ENCODE measurements at regions of chr17 and their contacts with region 1.

Region 1: GRCh38 chr17:67376737-67377487 is at the start of gene PITPNC1:
- DNase-seq: no peak
- ATAC-seq: peak; percentile 89
- H3K4me3 ChIP-seq: peak within 1 kb of the TSS; percentile 80 to 85
- H3K27ac ChIP-seq: peak within 1 kb of the TSS; percentile 70
- H3K4me1 ChIP-seq: peaks cover 12% of the 10 kb centered on the region
- H3K27me3 ChIP-seq: no peaks in the 10 kb centered on the region
- CTCF ChIP-seq: no peak
- total RNA-seq, gene PITPNC1: 20.8 TPM

Region 2: GRCh38 chr17:66580184-66580955 is 796.5 kb before region 1 on chr17:
- CTCF ChIA-PET with region 1: interaction called, 13 read pairs
- POLR2A ChIA-PET with region 1: no interaction called
- in situ Hi-C with region 1: no loop called
- intact Hi-C with region 1: no loop called
- DNase-seq: peak; percentile 7
- ATAC-seq: peak; percentile 66
- H3K4me3 ChIP-seq: no peak overlapping the region
- H3K27ac ChIP-seq: peak overlapping the region; percentile 70
- H3K4me1 ChIP-seq: peaks cover 26% of the 10 kb centered on the region
- H3K27me3 ChIP-seq: no peaks in the 10 kb centered on the region
- CTCF ChIP-seq: no peak

Region 3: GRCh38 chr17:67400193-67400592 is 23.3 kb after region 1 on chr17:
- CTCF ChIA-PET with region 1: no interaction called
- POLR2A ChIA-PET with region 1: interaction called, 19 read pairs
- in situ Hi-C with region 1: no loop called
- intact Hi-C with region 1: no loop called
- DNase-seq: no peak
- ATAC-seq: no peak
- H3K4me3 ChIP-seq: no peak overlapping the region
- H3K27ac ChIP-seq: peak overlapping the region; percentile 44
- H3K4me1 ChIP-seq: peaks cover 12% of the 10 kb centered on the region
- H3K27me3 ChIP-seq: no peaks in the 10 kb centered on the region
- CTCF ChIP-seq: no peak

Region 4: DNA sequence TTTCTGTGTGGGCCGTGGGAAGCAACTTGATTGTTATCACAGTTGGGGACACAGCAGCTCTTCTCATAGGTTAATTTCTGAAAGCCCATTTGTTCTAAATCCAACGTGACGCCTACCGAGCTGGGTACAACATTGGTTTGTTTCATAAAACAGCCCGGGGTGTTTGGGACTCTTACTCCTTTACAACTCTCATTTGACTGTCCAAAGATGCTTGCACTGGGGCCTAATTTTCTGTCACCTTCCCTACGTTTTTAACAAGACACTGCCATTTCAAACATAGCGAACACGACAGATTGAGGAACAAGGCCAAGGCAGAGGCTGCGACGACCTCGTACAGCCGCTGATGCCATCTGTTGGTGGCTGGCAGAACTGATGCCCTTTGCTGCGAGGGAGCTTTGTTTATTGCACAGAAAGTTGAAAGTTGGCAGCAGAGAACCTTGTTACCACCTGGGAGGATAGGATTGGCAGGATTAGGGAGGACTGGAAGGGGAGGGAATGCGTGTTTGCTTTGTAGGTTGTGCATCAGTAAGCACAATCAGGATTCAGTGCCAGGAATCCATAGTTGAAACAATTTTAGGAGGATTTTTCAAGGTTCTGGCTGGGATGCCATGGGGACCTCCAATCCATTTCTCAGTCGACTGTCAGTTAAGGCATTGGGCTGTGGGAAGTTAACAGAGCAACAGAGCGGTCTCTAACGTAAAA is 98.5 kb after region 1 on chr17:
- CTCF ChIA-PET with region 1: no interaction called
- POLR2A ChIA-PET with region 1: interaction called, 3 read pairs
- in situ Hi-C with region 1: no loop called
- intact Hi-C with region 1: loop called (anchors 2 kb)
- DNase-seq: peak; percentile 80
- ATAC-seq: peak; percentile 85
- H3K4me3 ChIP-seq: no peak overlapping the region
- H3K27ac ChIP-seq: peak overlapping the region; percentile 63
- H3K4me1 ChIP-seq: peaks cover 25% of the 10 kb centered on the region
- H3K27me3 ChIP-seq: no peaks in the 10 kb centered on the region
- CTCF ChIP-seq: peak; percentile 88

Region 5: GRCh38 chr17:67602956-67603355 is 226.0 kb after region 1 on chr17:
- CTCF ChIA-PET with region 1: no interaction called
- POLR2A ChIA-PET with region 1: no interaction called
- in situ Hi-C with region 1: no loop called
- intact Hi-C with region 1: loop called (anchors 5 kb)
- DNase-seq: peak; percentile 13
- ATAC-seq: peak; percentile 81
- H3K4me3 ChIP-seq: no peak overlapping the region
- H3K27ac ChIP-seq: no peak overlapping the region
- H3K4me1 ChIP-seq: no peaks in the 10 kb centered on the region
- H3K27me3 ChIP-seq: no peaks in the 10 kb centered on the region
- CTCF ChIP-seq: peak; percentile 64

Region 6: GRCh38 chr17:67689534-67690177 is 312.7 kb after region 1 on chr17:
- CTCF ChIA-PET with region 1: no interaction called
- POLR2A ChIA-PET with region 1: interaction called, 5 read pairs
- in situ Hi-C with region 1: no loop called
- intact Hi-C with region 1: loop called (anchors 2 kb)
- DNase-seq: peak; percentile 22
- ATAC-seq: no peak
- H3K4me3 ChIP-seq: no peak overlapping the region
- H3K27ac ChIP-seq: no peak overlapping the region
- H3K4me1 ChIP-seq: no peaks in the 10 kb centered on the region
- H3K27me3 ChIP-seq: no peaks in the 10 kb centered on the region
- CTCF ChIP-seq: peak; percentile 69; the same call in 1 of the 2 replicates

Measured in Panc1 (cell line).